Activated T-helper 1 cell treated with anti-CD3 and anti-CD28 coated beads, Interleukin-12 subunit alpha, Interleukin-12 subunit beta, Interleukin-2, Interleukin-4 antibody, amounts not matched to agents 30 ng/mL and 10 ng/mL and 1 ng/mL, durations not matched to agents 14 hours and 24 hours and 36 hours (primary cell): ENCODE measurements at regions of chr12 and their contacts with region 1.

Region 1: GRCh38 chr12:10540776-10541205 is 35.1 kb downstream of the EIF2S3B start:
- DNase-seq: no peak
- H3K4me3 Mint-ChIP-seq: no peak overlapping the region
- H3K27ac Mint-ChIP-seq: peak overlapping the region; percentile 57
- H3K4me1 Mint-ChIP-seq: peaks cover 12% of the 10 kb centered on the region
- H3K27me3 Mint-ChIP-seq: peaks cover 5% of the 10 kb centered on the region

Region 2: DNA sequence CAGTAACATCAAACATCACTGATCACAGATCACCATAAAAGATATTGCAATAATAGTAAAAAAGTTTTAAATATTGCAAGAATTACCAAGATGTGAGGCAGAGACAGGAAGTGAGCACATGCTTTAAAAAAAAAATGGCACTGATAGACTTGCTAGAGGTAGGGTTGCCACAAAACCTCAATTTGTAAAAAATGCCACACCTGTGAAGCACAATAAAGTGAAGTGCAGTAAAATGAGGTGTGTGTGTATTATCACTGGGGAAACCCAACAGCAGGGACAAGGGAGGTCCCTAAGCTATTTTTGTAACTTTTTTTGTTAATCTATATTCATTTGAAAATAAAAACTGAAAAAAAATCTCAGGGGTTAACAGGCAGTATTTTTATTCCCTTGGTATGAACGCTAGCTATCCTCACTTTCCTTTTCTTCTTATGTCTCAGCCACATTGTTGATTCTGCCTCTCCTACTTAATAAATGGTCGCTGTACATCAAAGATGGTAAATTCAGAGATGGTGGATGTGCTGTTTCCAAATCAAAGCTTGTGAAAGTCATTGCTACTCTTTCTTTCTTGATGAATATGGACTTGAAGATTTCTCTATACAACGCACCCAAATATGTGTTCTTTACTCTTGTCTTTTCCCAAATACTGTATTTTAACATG is 247.1 kb before region 1 on chr12:
- intact Hi-C with region 1: loop called (anchors 2 kb)
- DNase-seq: no peak
- H3K4me3 Mint-ChIP-seq: no peak overlapping the region
- H3K27ac Mint-ChIP-seq: no peak overlapping the region
- H3K4me1 Mint-ChIP-seq: peaks cover 31% of the 10 kb centered on the region
- H3K27me3 Mint-ChIP-seq: peaks cover 11% of the 10 kb centered on the region

Region 3: DNA sequence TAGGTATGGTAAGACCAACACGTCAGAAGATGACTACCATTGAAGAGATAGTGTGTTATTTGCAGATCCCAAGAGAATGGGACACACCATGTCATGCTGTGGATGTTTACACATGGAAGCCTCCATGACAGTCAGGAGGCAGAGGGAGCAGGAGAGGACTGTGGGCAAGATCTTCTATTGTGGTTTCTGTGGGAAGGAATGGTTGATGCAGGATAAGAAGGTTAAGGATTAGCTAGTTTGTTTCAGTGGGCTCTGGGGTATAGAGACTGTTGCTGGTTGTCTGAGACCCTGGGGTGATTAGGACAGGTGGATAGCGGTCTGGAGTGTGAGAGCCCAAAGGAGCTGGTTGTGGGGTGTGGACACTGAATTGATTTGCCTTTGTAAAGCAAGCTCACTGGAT is 238.3 kb after region 1 on chr12:
- intact Hi-C with region 1: no loop called
- DNase-seq: no peak
- H3K4me3 Mint-ChIP-seq: no peak overlapping the region
- H3K27ac Mint-ChIP-seq: no peak overlapping the region
- H3K4me1 Mint-ChIP-seq: no peaks in the 10 kb centered on the region
- H3K27me3 Mint-ChIP-seq: peaks cover 27% of the 10 kb centered on the region